Posterior vena cava (tissue), 2 donors: ENCODE measurements at regions of chr2 and their contacts with region 1.

Region 1: GRCh38 chr2:74250189-74250631 is 51.8 kb downstream of the MTHFD2 start:
- DNase-seq: peak; percentile 75

Region 2: GRCh38 chr2:74334931-74335333 is 84.7 kb after region 1 on chr2:
- intact Hi-C with region 1: loop called (anchors 10 kb)
- DNase-seq: peak; percentile 90

Region 3: DNA sequence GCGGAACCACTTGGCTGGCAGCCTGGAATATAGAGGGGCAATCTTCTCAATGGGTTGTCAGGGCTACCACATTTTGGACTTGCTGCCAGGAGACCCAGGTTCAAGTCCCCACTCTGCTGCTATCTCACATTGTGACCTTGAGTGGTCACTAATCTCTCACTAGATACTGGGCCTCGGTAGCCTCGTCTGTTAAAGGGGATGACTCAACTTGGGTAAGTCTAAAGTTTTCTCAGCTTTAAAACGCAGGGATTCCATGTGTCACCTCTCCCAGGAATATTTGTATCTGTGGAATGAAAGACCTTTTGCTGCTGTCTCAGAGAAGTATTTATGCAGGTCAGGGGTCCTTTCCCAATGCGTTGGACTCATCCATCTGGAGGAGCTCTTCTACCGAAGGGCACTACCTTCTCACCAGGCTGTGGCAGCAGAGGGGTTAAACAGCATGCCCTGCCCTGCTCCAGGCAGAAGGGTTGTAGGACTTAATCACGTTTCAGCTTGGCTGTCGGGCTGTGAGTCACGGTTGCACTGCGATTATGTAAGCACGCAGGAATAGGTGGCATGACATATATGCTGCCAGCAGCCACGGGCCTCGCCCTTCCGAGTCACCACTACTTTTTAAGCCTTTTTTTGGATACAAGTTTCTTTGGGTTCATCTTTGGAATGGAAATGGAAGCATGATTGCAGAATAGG is 490.3 kb after region 1 on chr2:
- intact Hi-C with region 1: no loop called
- DNase-seq: peak; percentile 85